ENCODE measurements at regions of chr1 and their contacts with region 1.

Region 1: GRCh38 chr1:220810179-220810653 is 23.5 kb downstream of the MTARC1 start:
- DNase-seq: peak; percentile 67
- H3K4me3 ChIP-seq: no peak overlapping the region; a peak in 1 of 4 replicates
- H3K27ac ChIP-seq: no peak overlapping the region
- H3K4me1 ChIP-seq: peaks cover 0 to 5% of the 10 kb centered on the region in 2 experiments; a peak in 1 of 4 replicates
- H3K27me3 ChIP-seq: no peaks in the 10 kb centered on the region
- CTCF ChIP-seq: peak; percentile 77
- EP300 ChIP-seq: no peak
- RAD21 ChIP-seq: peak; percentile 69

Region 2: GRCh38 chr1:220594356-220594755 is 215.9 kb before region 1 on chr1:
- CTCF ChIA-PET with region 1: no interaction called
- POLR2A ChIA-PET with region 1: no interaction called
- DNase-seq: no peak
- H3K4me3 ChIP-seq: no peak overlapping the region
- H3K27ac ChIP-seq: no peak overlapping the region
- H3K4me1 ChIP-seq: no peaks in the 10 kb centered on the region; a peak in 1 of 4 replicates
- H3K27me3 ChIP-seq: no peaks in the 10 kb centered on the region
- CTCF ChIP-seq: no peak
- EP300 ChIP-seq: no peak
- RAD21 ChIP-seq: no peak

Region 3: GRCh38 chr1:220628431-220628830 is 181.8 kb before region 1 on chr1:
- CTCF ChIA-PET with region 1: no interaction called
- POLR2A ChIA-PET with region 1: no interaction called
- DNase-seq: no peak
- H3K4me3 ChIP-seq: no peak overlapping the region
- H3K27ac ChIP-seq: no peak overlapping the region
- H3K4me1 ChIP-seq: no peaks in the 10 kb centered on the region
- H3K27me3 ChIP-seq: no peaks in the 10 kb centered on the region
- CTCF ChIP-seq: no peak
- EP300 ChIP-seq: no peak
- RAD21 ChIP-seq: no peak

Region 4: GRCh38 chr1:220796530-220796929 is 13.7 kb before region 1 on chr1:
- CTCF ChIA-PET with region 1: interaction called, 15 read pairs
- POLR2A ChIA-PET with region 1: no interaction called
- DNase-seq: no peak
- H3K4me3 ChIP-seq: no peak overlapping the region
- H3K27ac ChIP-seq: no peak overlapping the region
- H3K4me1 ChIP-seq: peaks cover 0 to under 1% of the 10 kb centered on the region in 2 experiments; a peak in 1 of 4 replicates
- H3K27me3 ChIP-seq: no peaks in the 10 kb centered on the region
- CTCF ChIP-seq: no peak
- EP300 ChIP-seq: no peak
- RAD21 ChIP-seq: no peak